ENCODE measurements at regions of chr17 and their contacts with region 1.

Region 1: DNA sequence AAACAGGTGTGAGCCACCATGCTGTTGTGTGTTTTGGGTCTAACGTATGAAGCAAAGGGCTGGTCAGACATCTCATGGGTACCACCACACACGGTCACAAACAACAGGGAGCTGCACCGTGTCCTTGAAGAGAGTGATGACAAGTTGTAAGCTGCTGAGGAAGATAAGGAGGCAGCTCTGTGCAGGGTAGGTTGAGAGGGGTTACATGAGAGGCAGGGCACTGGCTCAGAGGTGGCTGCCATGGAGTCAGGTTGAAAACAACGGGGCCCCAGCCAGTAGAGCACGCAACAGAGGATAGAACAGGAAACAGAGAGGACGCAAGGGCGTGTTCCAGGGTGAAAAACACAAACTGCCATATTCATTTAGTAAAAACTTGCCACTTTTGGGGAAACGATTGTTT is 52.2 kb downstream of the TRARG1 start:
- DNase-seq: no peak
- H3K4me3 ChIP-seq: no peak overlapping the region
- H3K27ac ChIP-seq: no peak overlapping the region
- H3K4me1 ChIP-seq: peaks cover 5 to 10% (median 9%) of the 10 kb centered on the region in 4 donors
- H3K27me3 ChIP-seq: no peaks in the 10 kb centered on the region
- CTCF ChIP-seq: no peak
- EP300 ChIP-seq: no peak
- POLR2A ChIP-seq: no peak

Region 2: GRCh38 chr17:1260086-1260769 is 71.5 kb before region 1 on chr17:
- intact Hi-C with region 1: loop called (anchors 2 kb)
- DNase-seq: no peak
- H3K4me3 ChIP-seq: peak overlapping the region; percentile 56 to 65 (median 60)
- H3K27ac ChIP-seq: peak overlapping the region; percentile 65 to 86 (median 82)
- H3K4me1 ChIP-seq: peaks cover 12 to 18% (median 15%) of the 10 kb centered on the region in 4 donors
- H3K27me3 ChIP-seq: peaks cover 0 to 4% (median 0%) of the 10 kb centered on the region in 4 donors
- CTCF ChIP-seq: no peak
- EP300 ChIP-seq: no peak
- POLR2A ChIP-seq: no peak

Region 3: DNA sequence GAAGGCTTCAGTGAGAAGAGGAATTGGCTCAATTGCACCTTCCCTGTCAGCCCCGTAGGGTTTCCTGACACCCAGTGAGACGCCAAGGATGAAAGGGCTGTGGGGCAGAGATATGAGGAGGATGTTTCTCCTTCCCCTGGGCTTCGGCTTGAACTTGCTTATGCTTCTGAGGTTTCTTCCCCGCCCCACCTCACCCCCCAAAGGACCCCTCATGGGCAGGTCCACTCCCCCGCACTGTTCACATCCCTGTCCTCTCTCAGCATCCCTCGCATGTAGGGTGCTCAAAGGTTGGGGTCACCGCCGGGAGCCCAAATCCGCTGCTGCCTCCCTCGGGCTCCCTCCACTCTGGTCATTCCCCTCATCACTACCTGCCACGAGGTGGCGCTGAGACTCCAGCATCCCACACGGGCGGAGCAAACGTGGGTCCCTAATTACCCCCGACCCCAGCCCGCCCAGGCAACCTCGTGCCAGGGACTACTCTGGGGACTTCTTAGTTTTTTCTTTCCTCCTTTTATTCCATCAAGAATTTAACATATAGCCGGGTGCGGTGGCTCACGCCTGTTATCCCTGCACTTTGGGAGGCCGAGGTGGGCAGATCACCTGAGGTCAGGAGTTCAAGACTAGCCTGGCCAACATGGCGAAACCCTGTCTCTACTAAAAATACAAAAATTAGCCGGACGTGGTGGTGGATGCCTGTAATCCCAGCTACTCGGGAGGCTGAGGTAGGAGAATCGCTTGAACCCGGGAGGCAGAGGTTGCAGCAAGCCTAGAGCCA is 55.6 kb before region 1 on chr17:
- intact Hi-C with region 1: loop called (anchors 5 kb)
- DNase-seq: peak; percentile 93
- H3K4me3 ChIP-seq: no peak overlapping the region
- H3K27ac ChIP-seq: no peak overlapping the region
- H3K4me1 ChIP-seq: peaks cover 0 to 14% (median 9%) of the 10 kb centered on the region in 4 donors
- H3K27me3 ChIP-seq: peaks cover 0 to 56% (median 7%) of the 10 kb centered on the region in 4 donors
- CTCF ChIP-seq: peak; percentile 69 to 88 (median 82)
- EP300 ChIP-seq: no peak
- POLR2A ChIP-seq: no peak

Region 4: GRCh38 chr17:1294157-1294717 is 37.5 kb before region 1 on chr17:
- intact Hi-C with region 1: no loop called
- DNase-seq: no peak
- H3K4me3 ChIP-seq: no peak overlapping the region
- H3K27ac ChIP-seq: no peak overlapping the region
- H3K4me1 ChIP-seq: peaks cover 3 to 11% (median 7%) of the 10 kb centered on the region in 4 donors
- H3K27me3 ChIP-seq: peaks cover 0 to 27% (median 0%) of the 10 kb centered on the region in 4 donors
- CTCF ChIP-seq: no peak
- EP300 ChIP-seq: no peak
- POLR2A ChIP-seq: no peak